Vagina (tissue), 2 donors: ENCODE measurements at regions of chr2 and their contacts with region 1.

Region 1: GRCh38 chr2:192162392-192163042 is 32.2 kb downstream of the TMEFF2 start:
- DNase-seq: no peak
- H3K4me3 ChIP-seq: peak overlapping the region in 1 of 2 donors; percentile 17
- H3K27ac ChIP-seq: no peak overlapping the region
- H3K4me1 ChIP-seq: peaks cover 5% of the 10 kb centered on the region
- H3K27me3 ChIP-seq: no peaks in the 10 kb centered on the region
- CTCF ChIP-seq: peak; percentile 94 to 97 (median 95)
- POLR2A ChIP-seq: no peak

Region 2: DNA sequence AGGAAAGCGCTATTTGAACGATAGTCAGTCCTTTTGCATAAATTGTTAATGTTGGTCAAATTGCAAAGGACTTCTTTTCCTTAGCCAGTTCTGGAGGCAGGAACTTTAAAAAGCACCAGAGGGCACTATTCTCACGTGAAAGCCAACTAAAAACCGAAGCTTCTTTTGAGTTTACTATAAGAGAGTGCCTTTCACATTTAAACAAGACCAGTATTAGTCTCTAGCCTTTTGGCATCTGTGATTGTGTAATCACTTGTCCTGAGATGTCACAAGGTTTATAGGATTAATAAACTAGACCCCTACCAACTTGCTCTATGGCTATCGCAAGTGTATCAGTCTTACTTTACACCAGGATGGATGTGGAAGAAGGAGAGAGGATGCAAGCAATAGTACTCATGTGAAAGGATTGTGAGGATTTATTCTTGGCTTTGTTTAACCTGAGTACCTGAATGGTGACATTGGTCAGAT is 997.3 kb before region 1 on chr2:
- intact Hi-C with region 1: loop called (anchors 10 kb)
- DNase-seq: no peak
- H3K4me3 ChIP-seq: no peak overlapping the region
- H3K27ac ChIP-seq: no peak overlapping the region
- H3K4me1 ChIP-seq: peaks cover 20% of the 10 kb centered on the region
- H3K27me3 ChIP-seq: no peaks in the 10 kb centered on the region
- CTCF ChIP-seq: peak; percentile 28 to 73 (median 60)
- POLR2A ChIP-seq: no peak

Region 3: DNA sequence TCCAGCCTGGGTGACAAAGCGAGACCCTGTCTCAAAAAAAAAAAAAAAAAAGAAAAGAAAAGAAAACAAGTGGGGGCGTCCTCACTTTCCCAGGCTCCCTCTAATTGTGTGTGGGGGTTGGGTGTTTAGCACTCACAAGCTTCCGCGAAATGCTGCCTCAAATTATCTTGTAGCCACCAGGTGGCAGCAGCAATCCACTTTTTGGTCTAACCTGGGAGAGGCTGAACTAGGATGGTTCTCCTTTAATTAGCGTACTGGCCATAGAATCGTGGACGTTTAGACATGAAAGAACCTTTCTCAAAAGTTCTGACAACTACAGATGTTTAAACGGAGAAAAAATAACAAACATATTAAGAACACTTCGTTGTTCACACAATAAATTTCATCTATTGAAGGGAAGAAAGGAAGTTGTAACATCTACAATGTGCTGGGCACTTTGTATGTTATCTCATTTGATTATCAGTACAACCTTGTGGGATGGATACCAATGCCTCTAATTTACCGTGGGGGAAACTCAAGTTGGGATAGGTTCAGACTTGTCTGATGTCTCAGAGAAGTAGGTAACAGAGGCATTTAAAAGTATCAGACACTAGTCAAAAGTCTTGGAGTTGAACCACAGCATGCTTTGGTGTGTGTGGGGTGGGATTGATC is 607.3 kb before region 1 on chr2:
- intact Hi-C with region 1: loop called (anchors 5 kb)
- DNase-seq: no peak
- H3K4me3 ChIP-seq: no peak overlapping the region
- H3K27ac ChIP-seq: no peak overlapping the region
- H3K4me1 ChIP-seq: peaks cover 3% of the 10 kb centered on the region
- H3K27me3 ChIP-seq: no peaks in the 10 kb centered on the region
- CTCF ChIP-seq: peak; percentile 64 to 71 (median 70)
- POLR2A ChIP-seq: no peak

Region 4: GRCh38 chr2:191811807-191812602 is 350.5 kb before region 1 on chr2:
- intact Hi-C with region 1: loop called (anchors 2 kb)
- DNase-seq: no peak
- H3K4me3 ChIP-seq: no peak overlapping the region
- H3K27ac ChIP-seq: no peak overlapping the region
- H3K4me1 ChIP-seq: no peaks in the 10 kb centered on the region
- H3K27me3 ChIP-seq: no peaks in the 10 kb centered on the region
- CTCF ChIP-seq: peak; percentile 56 to 88 (median 76)
- POLR2A ChIP-seq: no peak

Region 5: DNA sequence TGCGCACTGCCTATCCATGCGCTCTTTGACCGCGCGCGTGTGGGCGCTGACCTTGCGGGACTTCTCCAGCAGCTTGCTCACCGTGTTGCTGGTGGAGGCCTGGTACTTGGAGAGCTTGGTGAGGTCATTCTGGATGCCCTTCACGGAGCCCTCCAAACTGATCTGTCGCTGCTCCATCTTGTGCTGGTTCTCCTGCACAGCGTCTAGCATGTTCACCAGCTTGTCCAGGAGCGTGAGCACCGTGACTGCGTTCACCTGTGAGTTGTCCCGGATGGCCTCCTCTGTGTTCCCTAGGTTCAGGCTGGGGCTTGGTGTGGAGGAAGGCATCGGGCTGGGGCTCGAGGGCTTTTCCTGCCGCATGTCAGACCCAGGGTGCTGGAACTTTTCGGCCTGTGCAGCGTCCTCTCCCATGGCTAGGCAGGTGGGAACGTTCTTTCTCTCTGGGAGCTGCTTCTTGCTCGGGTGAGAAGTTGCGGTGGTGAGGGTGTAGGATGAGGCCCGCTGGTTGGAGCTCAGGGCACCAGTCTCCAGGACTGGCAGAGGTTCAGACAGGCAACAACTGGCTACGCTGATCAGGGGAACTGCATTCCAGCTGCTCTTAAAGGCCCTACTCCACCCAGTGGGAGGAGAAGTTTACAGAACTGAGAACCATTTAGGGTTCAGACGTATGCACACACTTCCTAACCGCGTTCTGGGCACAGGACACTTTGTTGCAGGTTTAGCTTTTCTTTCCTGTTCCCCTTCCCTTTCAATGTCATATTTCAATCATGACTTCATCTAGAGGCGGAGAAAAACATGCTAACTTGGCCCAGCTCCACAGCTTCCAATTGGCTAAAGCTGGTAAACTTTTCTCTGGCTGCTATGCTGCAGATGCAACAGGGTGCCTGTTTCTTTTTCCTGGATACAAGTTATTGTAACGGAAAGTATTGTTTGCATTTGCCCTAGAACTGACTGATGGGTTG is 315.7 kb before region 1 on chr2 and contains the start of gene CAVIN2:
- intact Hi-C with region 1: no loop called
- DNase-seq: no peak
- H3K4me3 ChIP-seq: peak within 1 kb of the TSS; percentile 45 to 46
- H3K27ac ChIP-seq: peak within 1 kb of the TSS; percentile 68
- H3K4me1 ChIP-seq: peaks cover 38% of the 10 kb centered on the region
- H3K27me3 ChIP-seq: no peaks in the 10 kb centered on the region
- CTCF ChIP-seq: no peak
- POLR2A ChIP-seq: peak in 1 of 2 donors; percentile 37
- total RNA-seq, gene CAVIN2: 50.6 TPM

Region 6: GRCh38 chr2:192146069-192147015 is 16.2 kb before region 1 on chr2:
- intact Hi-C with region 1: no loop called
- DNase-seq: no peak
- H3K4me3 ChIP-seq: no peak overlapping the region
- H3K27ac ChIP-seq: no peak overlapping the region
- H3K4me1 ChIP-seq: peaks cover 6% of the 10 kb centered on the region
- H3K27me3 ChIP-seq: no peaks in the 10 kb centered on the region
- CTCF ChIP-seq: no peak
- POLR2A ChIP-seq: no peak